ENCODE measurements at regions of chr4 and their contacts with region 1.

Region 1: GRCh38 chr4:3145234-3145924 is 70.9 kb downstream of the HTT start:
- DNase-seq: no peak
- H3K4me3 ChIP-seq: no peak overlapping the region
- CTCF ChIP-seq: no peak

Region 2: GRCh38 chr4:3158841-3159240 is 13.5 kb after region 1 on chr4:
- CTCF ChIA-PET with region 1: interaction called, 17 read pairs
- POLR2A ChIA-PET with region 1: no interaction called
- DNase-seq: no peak
- H3K4me3 ChIP-seq: no peak overlapping the region
- CTCF ChIP-seq: no peak

Region 3: GRCh38 chr4:3330707-3331106 is 185.3 kb after region 1 on chr4:
- CTCF ChIA-PET with region 1: no interaction called
- POLR2A ChIA-PET with region 1: no interaction called
- DNase-seq: no peak
- H3K4me3 ChIP-seq: no peak overlapping the region
- CTCF ChIP-seq: no peak

Measured in AG04449 (cell line).